ENCODE measurements at regions of chr6 and their contacts with region 1.

Region 1: GRCh38 chr6:161370880-161371279 is 97.0 kb upstream of the AGPAT4 start:
- DNase-seq: peak; percentile 55
- ATAC-seq: peak; percentile 80
- H3K4me3 ChIP-seq: no peak overlapping the region
- H3K27ac ChIP-seq: no peak overlapping the region
- H3K4me1 ChIP-seq: peaks cover 5% of the 10 kb centered on the region; the same call in 1 of the 2 replicates
- H3K27me3 ChIP-seq: no peaks in the 10 kb centered on the region
- CTCF ChIP-seq: peak; percentile 97

Region 2: DNA sequence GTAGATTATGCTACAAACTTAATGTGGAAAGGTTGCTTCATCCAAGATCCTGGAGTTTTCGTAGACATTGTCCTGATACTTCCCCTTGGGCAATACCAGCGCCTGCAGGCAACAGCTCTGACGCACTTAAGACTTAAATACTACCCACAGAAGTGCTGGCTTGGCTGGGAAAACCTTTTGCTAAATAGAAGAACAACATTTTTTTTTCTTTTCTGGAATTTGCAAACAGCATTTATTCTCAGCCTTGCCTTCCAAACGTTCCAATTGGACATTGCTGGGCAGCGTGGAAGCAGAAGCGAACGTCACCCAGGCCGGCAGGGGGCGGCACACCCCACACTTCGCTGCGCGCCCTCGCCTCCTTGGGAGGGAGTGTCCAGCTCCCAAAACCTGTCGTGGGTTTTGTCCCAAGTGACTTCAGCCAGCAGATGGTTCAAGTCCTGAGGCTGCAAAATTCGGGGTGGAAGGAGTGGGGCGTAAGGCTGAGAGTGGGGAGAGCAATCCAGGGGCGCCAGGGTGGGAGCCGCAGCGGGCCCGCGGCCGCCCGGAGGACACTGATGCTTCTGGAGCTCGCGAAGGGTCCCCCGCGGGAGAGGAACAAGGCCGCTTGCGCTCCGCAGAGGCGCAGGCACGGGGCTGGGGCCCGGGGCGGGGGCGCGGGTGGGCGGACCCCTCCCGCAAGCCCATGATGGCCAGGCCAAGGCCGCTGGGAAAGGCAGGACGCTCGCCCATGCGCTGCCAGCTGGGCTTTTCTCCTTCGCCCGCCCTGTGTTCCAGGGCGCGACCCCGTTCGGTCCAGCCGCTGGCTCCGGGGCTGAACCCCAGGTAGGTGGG is 440.1 kb before region 1 on chr6:
- CTCF ChIA-PET with region 1: interaction called, 8 read pairs
- POLR2A ChIA-PET with region 1: no interaction called
- in situ Hi-C with region 1: no loop called
- intact Hi-C with region 1: loop called (anchors 1 kb)
- DNase-seq: peak; percentile 42
- ATAC-seq: peak; percentile 96
- H3K4me3 ChIP-seq: peak overlapping the region; percentile 46 to 70
- H3K27ac ChIP-seq: no peak overlapping the region; the same call in 1 of the 2 replicates
- H3K4me1 ChIP-seq: peaks cover 4% of the 10 kb centered on the region; the same call in 1 of the 2 replicates
- H3K27me3 ChIP-seq: no peaks in the 10 kb centered on the region
- CTCF ChIP-seq: peak; percentile 92

Region 3: DNA sequence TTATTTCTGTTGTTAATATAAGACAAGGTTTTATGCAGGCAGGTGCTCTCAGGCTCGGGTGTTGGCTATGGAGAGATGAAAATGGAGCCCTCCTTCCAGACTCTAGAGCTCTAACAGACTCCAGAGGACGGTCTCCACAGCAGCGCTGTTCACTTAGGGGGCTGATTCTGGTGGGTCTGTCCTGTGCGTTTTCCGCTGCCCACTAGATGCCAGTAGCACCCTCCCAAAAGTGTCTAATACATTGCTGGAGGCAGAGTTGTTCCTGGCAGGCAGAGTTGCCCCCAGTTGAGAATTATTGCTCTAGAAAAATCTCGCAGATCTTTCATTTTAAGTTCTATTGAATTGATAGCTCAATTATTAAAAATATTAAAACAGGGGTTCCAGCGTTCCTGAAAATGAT is 269.4 kb before region 1 on chr6:
- CTCF ChIA-PET with region 1: interaction called, 8 read pairs
- POLR2A ChIA-PET with region 1: no interaction called
- in situ Hi-C with region 1: no loop called
- intact Hi-C with region 1: loop called (anchors 5 kb)
- DNase-seq: no peak
- ATAC-seq: no peak
- H3K4me3 ChIP-seq: no peak overlapping the region
- H3K27ac ChIP-seq: no peak overlapping the region
- H3K4me1 ChIP-seq: no peaks in the 10 kb centered on the region
- H3K27me3 ChIP-seq: no peaks in the 10 kb centered on the region
- CTCF ChIP-seq: peak; percentile 39

Region 4: GRCh38 chr6:161273752-161274487 is 97.0 kb before region 1 on chr6 and contains the start of gene AGPAT4:
- CTCF ChIA-PET with region 1: interaction called, 4 read pairs
- POLR2A ChIA-PET with region 1: no interaction called
- in situ Hi-C with region 1: no loop called
- intact Hi-C with region 1: loop called (anchors 5 kb)
- DNase-seq: peak; percentile 87
- ATAC-seq: peak; percentile 98
- H3K4me3 ChIP-seq: peak within 1 kb of the TSS; percentile 55 to 89
- H3K27ac ChIP-seq: peak within 1 kb of the TSS; percentile 92
- H3K4me1 ChIP-seq: peaks cover 24% of the 10 kb centered on the region
- H3K27me3 ChIP-seq: no peaks in the 10 kb centered on the region
- CTCF ChIP-seq: no peak
- total RNA-seq, gene AGPAT4: 12.9 TPM